ENCODE measurements at regions of chr15 and their contacts with region 1.

Region 1: GRCh38 chr15:69475769-69476358 is 23.2 kb downstream of the RPLP1 start:
- DNase-seq: peak; percentile 65
- H3K4me3 ChIP-seq: no peak overlapping the region
- H3K27ac ChIP-seq: no peak overlapping the region
- H3K4me1 ChIP-seq: peaks cover 5% of the 10 kb centered on the region
- H3K27me3 ChIP-seq: no peaks in the 10 kb centered on the region
- CTCF ChIP-seq: peak; percentile 98

Region 2: GRCh38 chr15:69704700-69705099 is 228.8 kb after region 1 on chr15:
- CTCF ChIA-PET with region 1: no interaction called
- dilution Hi-C with region 1: no loop called
- in situ Hi-C with region 1: no loop called
- intact Hi-C with region 1: loop called (anchors 5 kb)
- DNase-seq: no peak
- H3K4me3 ChIP-seq: no peak overlapping the region
- H3K27ac ChIP-seq: no peak overlapping the region
- H3K4me1 ChIP-seq: no peaks in the 10 kb centered on the region
- H3K27me3 ChIP-seq: peaks cover 2% of the 10 kb centered on the region
- CTCF ChIP-seq: no peak

Region 3: DNA sequence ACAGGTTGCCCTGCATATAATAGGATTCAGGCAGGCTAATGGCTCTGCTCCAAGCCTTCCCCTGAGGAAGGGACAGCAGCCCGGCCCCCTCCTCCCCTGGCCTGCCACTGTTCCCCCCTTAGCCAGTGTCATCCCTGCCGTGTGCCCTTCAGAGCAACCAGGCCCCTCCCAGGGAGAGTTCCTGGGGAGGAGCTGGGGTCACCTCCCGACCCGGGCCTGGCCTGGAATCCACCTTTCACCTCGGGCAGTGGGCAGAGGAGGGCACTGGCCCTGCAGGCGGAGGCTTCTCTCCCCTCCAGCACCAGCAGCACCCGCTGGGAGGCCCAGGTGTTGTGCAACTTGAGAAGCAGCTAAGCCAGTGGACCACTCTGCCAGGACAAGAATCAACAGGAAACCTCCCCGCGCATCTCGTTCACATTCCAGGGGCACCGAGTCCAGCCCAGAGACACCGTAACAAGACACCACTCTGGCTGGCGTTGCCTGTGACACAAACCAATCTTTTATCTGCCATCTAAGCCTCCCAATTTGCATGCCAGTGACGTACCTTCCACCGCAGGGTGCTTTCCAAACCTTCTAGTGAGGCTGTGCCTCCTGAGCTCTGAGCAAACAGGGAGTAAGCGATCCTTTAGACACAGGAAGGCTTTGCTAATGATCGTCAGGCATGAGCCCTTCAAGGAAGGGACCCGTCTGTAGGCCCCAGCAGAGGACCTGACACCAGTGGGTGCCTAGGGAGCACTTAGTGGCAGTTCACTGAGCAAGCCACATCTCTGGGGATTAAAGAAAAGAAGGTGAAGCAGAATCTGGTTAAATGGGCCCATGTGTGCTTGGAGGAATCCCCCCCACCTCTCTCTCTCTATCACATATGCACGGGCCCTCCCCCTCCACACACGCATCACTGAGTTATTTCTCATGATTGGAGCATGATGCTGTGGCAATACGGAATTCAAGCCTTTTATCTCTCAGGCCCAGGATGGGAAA is 720.7 kb after region 1 on chr15:
- CTCF ChIA-PET with region 1: no interaction called
- dilution Hi-C with region 1: no loop called
- in situ Hi-C with region 1: no loop called
- intact Hi-C with region 1: loop called (anchors 10 kb)
- DNase-seq: peak; percentile 100
- H3K4me3 ChIP-seq: no peak overlapping the region
- H3K27ac ChIP-seq: peak overlapping the region; percentile 90
- H3K4me1 ChIP-seq: peaks cover 33% of the 10 kb centered on the region
- H3K27me3 ChIP-seq: no peaks in the 10 kb centered on the region
- CTCF ChIP-seq: peak in 1 of 2 donors; percentile 26

Region 4: GRCh38 chr15:70466895-70467529 is 991.1 kb after region 1 on chr15:
- CTCF ChIA-PET with region 1: interaction called, 5 read pairs
- dilution Hi-C with region 1: no loop called
- in situ Hi-C with region 1: no loop called
- intact Hi-C with region 1: loop called (anchors 2 kb)
- DNase-seq: peak; percentile 51
- H3K4me3 ChIP-seq: no peak overlapping the region
- H3K27ac ChIP-seq: no peak overlapping the region
- H3K4me1 ChIP-seq: peaks cover 6% of the 10 kb centered on the region
- H3K27me3 ChIP-seq: peaks cover 20% of the 10 kb centered on the region
- CTCF ChIP-seq: peak; percentile 70 to 83

Region 5: DNA sequence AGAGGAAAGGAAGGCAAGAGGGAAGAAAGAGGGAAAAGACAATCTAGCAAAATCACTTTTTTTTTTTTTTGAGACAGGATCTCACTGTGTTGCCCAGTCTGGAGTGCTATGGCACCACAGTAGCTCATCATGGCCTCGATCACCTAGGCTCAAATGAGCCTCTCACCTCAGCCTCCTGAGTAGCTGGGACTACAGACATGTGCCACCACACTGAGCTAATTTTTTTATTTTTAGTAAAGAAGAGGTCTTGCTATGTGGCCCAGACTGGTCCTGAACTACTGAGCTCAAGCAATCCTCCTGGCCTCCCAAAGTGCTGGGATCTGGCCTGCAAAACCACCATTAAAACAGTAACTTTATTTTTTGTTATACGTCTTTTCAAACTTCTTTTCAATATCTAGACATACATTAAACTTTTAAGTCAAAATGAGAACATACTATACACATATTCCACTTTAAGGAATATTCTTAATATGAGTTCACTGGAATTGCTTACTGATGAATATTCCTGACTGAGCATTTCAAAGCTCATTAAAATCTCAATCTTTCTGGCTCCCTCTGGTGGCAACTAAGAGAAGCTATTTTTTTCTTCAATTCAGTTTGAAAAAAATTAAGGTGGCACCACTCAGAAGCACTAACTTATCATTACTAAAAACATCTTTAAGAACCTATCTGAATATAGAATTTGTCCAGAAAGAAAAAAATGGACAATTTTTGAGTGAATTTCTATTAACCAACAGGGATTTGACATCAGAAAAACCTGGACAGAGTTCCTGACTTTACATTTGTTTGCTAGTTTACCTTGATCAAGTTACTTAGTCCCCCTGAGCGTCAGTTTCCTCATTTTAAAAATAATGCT is 1246.6 kb after region 1 on chr15:
- CTCF ChIA-PET with region 1: interaction called, 9 read pairs
- dilution Hi-C with region 1: no loop called
- in situ Hi-C with region 1: no loop called
- intact Hi-C with region 1: loop called (anchors 10 kb)
- DNase-seq: no peak
- H3K4me3 ChIP-seq: no peak overlapping the region
- H3K27ac ChIP-seq: no peak overlapping the region
- H3K4me1 ChIP-seq: no peaks in the 10 kb centered on the region
- H3K27me3 ChIP-seq: no peaks in the 10 kb centered on the region
- CTCF ChIP-seq: peak; percentile 74 to 77

Measured in mammary epithelial cell (primary cell).